Posterior cingulate gyrus (tissue), 11 donors: ENCODE measurements at regions of chr5 and their contacts with region 1.

Region 1: DNA sequence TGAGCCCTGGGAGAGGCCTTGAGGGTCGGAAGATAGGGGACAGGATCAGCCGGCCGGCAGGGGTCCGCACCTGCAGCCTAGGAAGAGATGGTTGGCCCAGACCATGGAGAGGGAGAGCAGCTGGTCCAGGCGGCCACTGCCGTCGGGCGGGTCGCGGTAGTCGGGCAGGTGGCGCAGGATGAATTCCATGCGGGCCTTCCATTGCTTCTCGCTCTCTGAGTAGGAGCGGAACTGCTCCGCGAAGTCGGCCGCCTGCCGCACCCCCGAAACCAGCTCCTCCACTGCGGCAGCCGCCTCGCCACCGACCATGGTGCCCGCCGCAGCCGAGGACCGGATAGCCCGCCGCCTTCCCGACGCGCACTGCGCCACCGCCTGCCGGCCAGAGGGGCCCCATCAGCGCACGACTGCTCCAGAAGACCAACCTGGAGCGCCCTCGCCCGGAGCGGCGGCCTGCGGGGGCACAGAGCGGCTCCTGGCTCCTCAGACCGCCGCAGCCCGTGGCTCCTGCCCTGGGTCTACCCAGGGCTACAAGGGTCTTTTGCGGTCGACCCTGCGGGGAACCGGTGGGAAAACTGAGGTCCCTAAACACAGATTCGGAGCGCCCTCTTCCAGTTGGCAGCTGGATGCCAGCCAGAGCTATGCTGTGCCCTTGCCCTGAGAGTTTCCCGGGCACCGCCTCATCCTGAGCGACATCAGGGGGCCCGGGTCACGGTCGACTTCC is at the start of gene CDKN2AIPNL:
- DNase-seq: peak; percentile 90 to 99 (median 96)

Region 2: GRCh38 chr5:134465816-134466240 is 54.1 kb after region 1 on chr5:
- intact Hi-C with region 1: loop called (anchors 5 kb)
- DNase-seq: peak; percentile 49 to 97 (median 79)

Region 3: GRCh38 chr5:134577796-134578363 is 166.2 kb after region 1 on chr5:
- intact Hi-C with region 1: loop called (anchors 5 kb)
- DNase-seq: peak; percentile 58 to 96 (median 83)